K562 (cell line): ENCODE measurements at regions of chr14 and their contacts with region 1.

Region 1: DNA sequence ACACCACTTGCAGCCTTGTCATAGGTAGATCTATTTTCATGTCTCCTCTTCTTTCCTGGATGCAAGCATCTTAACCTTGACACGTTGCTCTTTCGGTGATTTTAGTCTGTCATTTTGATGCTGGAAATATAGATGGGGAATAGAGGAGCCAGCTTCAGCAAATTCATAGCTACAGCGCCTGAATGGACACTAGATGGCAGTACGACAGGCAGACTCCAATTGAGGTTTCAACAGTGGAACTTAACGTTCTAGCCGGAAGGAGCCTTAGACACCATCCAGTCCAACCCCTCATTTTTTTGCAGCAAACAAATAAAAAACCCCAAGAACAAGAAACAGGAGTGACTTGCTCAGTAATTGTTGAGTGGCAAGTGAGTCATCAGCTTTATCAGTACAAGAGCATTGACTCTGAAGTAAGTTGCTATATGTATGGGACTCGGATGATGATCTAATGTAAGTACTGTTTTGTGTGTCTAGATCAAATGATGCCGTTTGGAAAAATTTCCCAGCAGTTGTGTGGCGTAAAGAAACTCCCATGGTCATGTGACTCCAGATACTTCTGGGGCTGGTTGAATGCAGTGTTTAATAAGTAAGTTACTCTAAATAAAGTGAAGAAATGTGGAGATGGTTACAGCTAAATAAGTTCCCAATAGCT is 9.0 kb downstream of the DMAC2L start:
- DNase-seq: peak; percentile 43 to 85 (median 60)
- ATAC-seq: peak; percentile 96
- H3K4me3 ChIP-seq: 0 out of 2 replicates have a peak overlapping the region, but pooled peaks have one; percentile 12
- H3K27ac ChIP-seq: peak overlapping the region; percentile 79
- H3K4me1 ChIP-seq: peaks cover 0 to 9% of the 10 kb centered on the region in 2 experiments; a peak in 3 of 5 replicates
- H3K27me3 ChIP-seq: no peaks in the 10 kb centered on the region
- CTCF ChIP-seq: peak; percentile 72 to 82 (median 78)
- EP300 ChIP-seq: peak; percentile 51; the same call in 1 of the 2 replicates
- POLR2A ChIP-seq: no peak
- RAD21 ChIP-seq: peak; percentile 60 to 64

Region 2: GRCh38 chr14:50257751-50258150 is 63.4 kb before region 1 on chr14:
- CTCF ChIA-PET with region 1: no interaction called
- POLR2A ChIA-PET with region 1: no interaction called
- in situ Hi-C with region 1: no loop called
- intact Hi-C with region 1: no loop called
- DNase-seq: peak; percentile 10 to 53 (median 36)
- ATAC-seq: peak; percentile 82
- H3K4me3 ChIP-seq: no peak overlapping the region
- H3K27ac ChIP-seq: no peak overlapping the region
- H3K4me1 ChIP-seq: no peaks in the 10 kb centered on the region; a peak in 3 of 5 replicates
- H3K27me3 ChIP-seq: no peaks in the 10 kb centered on the region
- CTCF ChIP-seq: no peak
- EP300 ChIP-seq: no peak
- POLR2A ChIP-seq: no peak
- RAD21 ChIP-seq: no peak

Region 3: GRCh38 chr14:50342221-50343078 is 21.3 kb after region 1 on chr14:
- CTCF ChIA-PET with region 1: no interaction called
- POLR2A ChIA-PET with region 1: no interaction called
- in situ Hi-C with region 1: no loop called
- intact Hi-C with region 1: loop called (anchors 1 kb)
- DNase-seq: peak; percentile 43 to 90 (median 70)
- ATAC-seq: peak; percentile 97
- H3K4me3 ChIP-seq: no peak overlapping the region
- H3K27ac ChIP-seq: peak overlapping the region; percentile 45; the same call in 1 of the 3 replicates
- H3K4me1 ChIP-seq: peaks cover 0 to 22% of the 10 kb centered on the region in 2 experiments; a peak in 3 of 5 replicates
- H3K27me3 ChIP-seq: no peaks in the 10 kb centered on the region
- CTCF ChIP-seq: peak; percentile 72 to 84 (median 74)
- EP300 ChIP-seq: peak; percentile 73; the same call in 1 of the 2 replicates
- POLR2A ChIP-seq: no peak
- RAD21 ChIP-seq: peak; percentile 90

Region 4: GRCh38 chr14:50396631-50397390 is 75.7 kb after region 1 on chr14 and contains the start of gene CDKL1:
- CTCF ChIA-PET with region 1: no interaction called
- POLR2A ChIA-PET with region 1: interaction called, 3 read pairs
- in situ Hi-C with region 1: no loop called
- intact Hi-C with region 1: loop called (anchors 2 kb)
- DNase-seq: peak; percentile 59 to 76 (median 74)
- ATAC-seq: peak; percentile 88
- H3K4me3 ChIP-seq: peak within 1 kb of the TSS; percentile 60
- H3K27ac ChIP-seq: peak within 1 kb of the TSS; percentile 74
- H3K4me1 ChIP-seq: peaks cover 5 to 15% of the 10 kb centered on the region in 2 experiments; a peak in 4 of 5 replicates
- H3K27me3 ChIP-seq: no peaks in the 10 kb centered on the region
- CTCF ChIP-seq: no peak
- EP300 ChIP-seq: no peak
- POLR2A ChIP-seq: peak; percentile 7; the same call in 1 of the 2 replicates
- RAD21 ChIP-seq: no peak
- polyA plus RNA-seq, gene CDKL1: 2.3 to 4.8 TPM

Region 5: GRCh38 chr14:50501642-50502041 is 180.5 kb after region 1 on chr14:
- CTCF ChIA-PET with region 1: no interaction called
- POLR2A ChIA-PET with region 1: no interaction called
- in situ Hi-C with region 1: no loop called
- intact Hi-C with region 1: no loop called
- DNase-seq: no peak
- ATAC-seq: no peak
- H3K4me3 ChIP-seq: no peak overlapping the region
- H3K27ac ChIP-seq: no peak overlapping the region
- H3K4me1 ChIP-seq: no peaks in the 10 kb centered on the region
- H3K27me3 ChIP-seq: no peaks in the 10 kb centered on the region
- CTCF ChIP-seq: no peak
- EP300 ChIP-seq: no peak
- POLR2A ChIP-seq: no peak
- RAD21 ChIP-seq: no peak

Region 6: GRCh38 chr14:50520947-50521815 is 200.0 kb after region 1 on chr14:
- CTCF ChIA-PET with region 1: no interaction called
- POLR2A ChIA-PET with region 1: no interaction called
- in situ Hi-C with region 1: loop called (anchors 10 kb)
- intact Hi-C with region 1: no loop called
- DNase-seq: peak in 2 of 4 experiments; percentile 7 to 10
- ATAC-seq: no peak
- H3K4me3 ChIP-seq: no peak overlapping the region
- H3K27ac ChIP-seq: no peak overlapping the region; the same call in 2 of the 3 replicates
- H3K4me1 ChIP-seq: peaks cover 0 to 2% of the 10 kb centered on the region in 2 experiments; a peak in 2 of 5 replicates
- H3K27me3 ChIP-seq: no peaks in the 10 kb centered on the region
- CTCF ChIP-seq: no peak
- EP300 ChIP-seq: no peak
- POLR2A ChIP-seq: no peak
- RAD21 ChIP-seq: no peak